ENCODE measurements at regions of chr12 and their contacts with region 1.

Region 1: DNA sequence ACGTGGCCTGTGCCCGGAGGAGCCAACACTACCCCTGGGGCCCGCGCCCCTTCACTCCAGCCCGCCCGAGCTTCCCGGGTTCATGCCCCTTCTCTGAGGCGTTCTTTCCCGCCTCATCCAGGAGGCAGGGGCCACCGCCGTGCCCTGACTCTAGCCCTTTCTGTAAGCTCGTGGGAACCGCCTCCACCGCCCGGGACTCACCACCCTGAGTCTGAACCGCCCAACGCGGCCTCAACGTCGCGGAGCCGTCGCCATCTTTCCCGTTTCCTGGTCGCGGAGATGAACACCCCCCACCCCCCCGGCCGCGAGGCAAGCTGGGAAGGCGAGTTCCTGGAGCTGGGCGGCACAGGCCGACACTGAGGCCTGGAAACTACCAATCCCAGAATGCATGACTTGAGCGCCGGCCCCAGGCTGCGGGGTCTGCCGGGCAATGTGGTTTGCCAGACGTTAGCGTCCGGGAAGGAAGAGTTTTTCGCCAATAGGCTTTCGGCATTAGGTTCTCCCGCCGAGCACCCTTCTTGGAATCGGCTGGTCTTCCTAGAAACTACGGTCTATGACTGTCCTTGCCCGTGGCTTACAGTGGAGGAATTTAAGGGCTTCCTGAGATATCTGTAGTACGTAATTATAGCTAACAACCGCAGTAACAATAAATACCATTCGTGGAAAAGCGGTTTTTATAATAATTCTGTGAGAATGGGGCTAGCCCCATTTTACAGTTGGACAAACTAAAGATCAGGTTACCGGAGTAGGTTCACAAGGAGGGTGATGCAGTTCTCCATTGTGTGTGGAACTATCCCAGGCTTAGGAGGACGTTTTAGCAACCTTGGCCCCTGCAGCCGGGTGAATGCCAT is at the start of gene DDX23:
- DNase-seq: peak; percentile 82 to 98 (median 88)
- ATAC-seq: peak; percentile 93
- H3K4me3 ChIP-seq: peak within 1 kb of the TSS; percentile 81
- H3K4me3 Mint-ChIP-seq: peak within 1 kb of the TSS; percentile 98
- H3K27ac ChIP-seq: peak within 1 kb of the TSS; percentile 83 to 94
- H3K27ac Mint-ChIP-seq: peak within 1 kb of the TSS; percentile 93
- H3K4me1 ChIP-seq: peaks cover 47% of the 10 kb centered on the region
- H3K4me1 Mint-ChIP-seq: peaks cover 47% of the 10 kb centered on the region
- H3K27me3 ChIP-seq: no peaks in the 10 kb centered on the region
- H3K27me3 Mint-ChIP-seq: no peaks in the 10 kb centered on the region
- CTCF ChIP-seq: no peak
- total RNA-seq, gene DDX23: 69.4 to 76.5 TPM

Region 2: GRCh38 chr12:48379780-48380179 is 472.3 kb before region 1 on chr12:
- CTCF ChIA-PET with region 1: no interaction called
- POLR2A ChIA-PET with region 1: no interaction called
- intact Hi-C with region 1: no loop called
- DNase-seq: no peak
- ATAC-seq: no peak
- H3K4me3 ChIP-seq: no peak overlapping the region
- H3K4me3 Mint-ChIP-seq: no peak overlapping the region
- H3K27ac ChIP-seq: no peak overlapping the region
- H3K27ac Mint-ChIP-seq: no peak overlapping the region
- H3K4me1 ChIP-seq: no peaks in the 10 kb centered on the region
- H3K4me1 Mint-ChIP-seq: no peaks in the 10 kb centered on the region
- H3K27me3 ChIP-seq: no peaks in the 10 kb centered on the region
- H3K27me3 Mint-ChIP-seq: peaks cover 5% of the 10 kb centered on the region
- CTCF ChIP-seq: no peak

Region 3: DNA sequence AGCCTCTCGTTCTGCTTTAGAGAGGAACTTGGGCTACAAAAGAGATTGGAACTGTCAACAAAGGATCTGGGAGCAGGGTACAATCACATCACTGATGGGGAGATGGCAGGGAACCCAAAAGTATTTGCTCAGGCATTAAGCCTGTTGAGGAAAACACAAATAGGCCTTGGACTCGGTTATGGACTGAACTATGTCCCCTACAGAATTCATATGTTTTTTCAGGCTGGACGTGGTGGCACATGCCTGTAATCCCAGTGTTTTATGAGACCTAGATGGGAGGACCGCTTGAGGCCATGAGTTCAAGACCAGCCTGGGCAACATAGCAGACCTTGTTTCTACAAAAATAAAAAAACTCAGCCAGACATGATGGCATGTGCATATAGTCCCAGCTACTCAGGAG is 14.1 kb before region 1 on chr12:
- CTCF ChIA-PET with region 1: interaction called, 12 read pairs
- POLR2A ChIA-PET with region 1: interaction called, 4 read pairs
- intact Hi-C with region 1: no loop called
- DNase-seq: no peak
- ATAC-seq: no peak
- H3K4me3 ChIP-seq: no peak overlapping the region
- H3K4me3 Mint-ChIP-seq: no peak overlapping the region
- H3K27ac ChIP-seq: no peak overlapping the region
- H3K27ac Mint-ChIP-seq: no peak overlapping the region
- H3K4me1 ChIP-seq: no peaks in the 10 kb centered on the region
- H3K4me1 Mint-ChIP-seq: no peaks in the 10 kb centered on the region
- H3K27me3 ChIP-seq: no peaks in the 10 kb centered on the region
- H3K27me3 Mint-ChIP-seq: no peaks in the 10 kb centered on the region
- CTCF ChIP-seq: no peak

Region 4: GRCh38 chr12:48890657-48891418 is 38.7 kb after region 1 on chr12:
- CTCF ChIA-PET with region 1: interaction called, 64 read pairs
- POLR2A ChIA-PET with region 1: interaction called, 47 read pairs
- intact Hi-C with region 1: loop called (anchors 1 kb)
- DNase-seq: peak; percentile 51 to 85 (median 70)
- ATAC-seq: peak; percentile 96
- H3K4me3 ChIP-seq: no peak overlapping the region
- H3K4me3 Mint-ChIP-seq: no peak overlapping the region
- H3K27ac ChIP-seq: no peak overlapping the region
- H3K27ac Mint-ChIP-seq: no peak overlapping the region
- H3K4me1 ChIP-seq: peaks cover 10% of the 10 kb centered on the region
- H3K4me1 Mint-ChIP-seq: peaks cover 5% of the 10 kb centered on the region
- H3K27me3 ChIP-seq: peaks cover 10 to 17% of the 10 kb centered on the region in 2 experiments
- H3K27me3 Mint-ChIP-seq: peaks cover 22% of the 10 kb centered on the region
- CTCF ChIP-seq: peak; percentile 86

Region 5: GRCh38 chr12:48924617-48925303 is 72.7 kb after region 1 on chr12:
- CTCF ChIA-PET with region 1: interaction called, 24 read pairs
- POLR2A ChIA-PET with region 1: interaction called, 31 read pairs
- intact Hi-C with region 1: no loop called
- DNase-seq: peak; percentile 60 to 91 (median 74)
- ATAC-seq: peak; percentile 84
- H3K4me3 ChIP-seq: peak overlapping the region; percentile 100
- H3K4me3 Mint-ChIP-seq: peak overlapping the region; percentile 99
- H3K27ac ChIP-seq: peak overlapping the region; percentile 87 to 91
- H3K27ac Mint-ChIP-seq: peak overlapping the region; percentile 86
- H3K4me1 ChIP-seq: peaks cover 52% of the 10 kb centered on the region
- H3K4me1 Mint-ChIP-seq: peaks cover 63% of the 10 kb centered on the region
- H3K27me3 ChIP-seq: no peaks in the 10 kb centered on the region
- H3K27me3 Mint-ChIP-seq: no peaks in the 10 kb centered on the region
- CTCF ChIP-seq: peak; percentile 75

Region 6: GRCh38 chr12:48957141-48958048 is 105.3 kb after region 1 on chr12 and contains the start of gene ARF3:
- CTCF ChIA-PET with region 1: interaction called, 5 read pairs
- POLR2A ChIA-PET with region 1: interaction called, 29 read pairs
- intact Hi-C with region 1: no loop called
- DNase-seq: peak; percentile 84 to 97 (median 92)
- ATAC-seq: peak; percentile 96
- H3K4me3 ChIP-seq: peak within 1 kb of the TSS; percentile 86
- H3K4me3 Mint-ChIP-seq: peak within 1 kb of the TSS; percentile 100
- H3K27ac ChIP-seq: peak within 1 kb of the TSS; percentile 35 to 51
- H3K27ac Mint-ChIP-seq: peak within 1 kb of the TSS; percentile 91
- H3K4me1 ChIP-seq: peaks cover 25% of the 10 kb centered on the region
- H3K4me1 Mint-ChIP-seq: peaks cover 54% of the 10 kb centered on the region
- H3K27me3 ChIP-seq: no peaks in the 10 kb centered on the region
- H3K27me3 Mint-ChIP-seq: peaks cover 6% of the 10 kb centered on the region
- CTCF ChIP-seq: no peak
- total RNA-seq, gene ARF3: 32.0 to 34.6 TPM

Region 7: DNA sequence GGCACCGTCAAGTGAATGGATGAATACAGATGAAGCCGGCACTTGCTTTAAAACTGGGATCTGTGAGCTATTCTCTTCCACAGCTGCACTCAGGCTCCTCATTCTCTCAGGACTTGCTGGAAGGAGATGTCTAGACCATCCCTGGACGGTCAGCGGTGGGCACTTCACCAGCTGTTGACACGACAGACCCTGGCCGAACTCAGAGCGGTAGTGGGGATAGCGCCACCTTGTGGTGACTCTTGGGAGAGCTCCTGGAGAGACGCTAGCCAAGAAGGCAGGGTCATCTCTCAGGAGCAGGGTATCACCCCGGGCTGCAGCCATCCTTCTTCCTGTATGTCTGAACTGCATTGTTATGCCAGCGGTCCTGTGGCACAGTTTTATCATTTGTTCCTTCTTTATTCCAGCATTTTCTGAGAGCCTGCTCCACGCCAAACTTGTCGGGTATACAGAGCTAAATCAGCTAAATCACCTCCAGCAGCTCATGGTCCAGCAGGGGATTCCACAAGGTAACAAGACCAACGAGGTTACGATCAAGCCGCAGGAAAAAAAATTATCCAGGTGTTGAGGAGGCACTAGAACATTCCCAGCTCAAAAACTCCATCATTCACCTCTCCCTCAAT is 136.0 kb after region 1 on chr12:
- CTCF ChIA-PET with region 1: interaction called, 11 read pairs
- POLR2A ChIA-PET with region 1: interaction called, 12 read pairs
- intact Hi-C with region 1: loop called in 1 of 2 experiments (anchors 2 kb)
- DNase-seq: peak; percentile 50 to 85 (median 68)
- ATAC-seq: peak; percentile 76
- H3K4me3 ChIP-seq: no peak overlapping the region
- H3K4me3 Mint-ChIP-seq: no peak overlapping the region
- H3K27ac ChIP-seq: no peak overlapping the region
- H3K27ac Mint-ChIP-seq: no peak overlapping the region
- H3K4me1 ChIP-seq: peaks cover 7% of the 10 kb centered on the region
- H3K4me1 Mint-ChIP-seq: peaks cover 6% of the 10 kb centered on the region
- H3K27me3 ChIP-seq: peaks cover 0 to 23% of the 10 kb centered on the region in 2 experiments
- H3K27me3 Mint-ChIP-seq: peaks cover 50% of the 10 kb centered on the region
- CTCF ChIP-seq: peak; percentile 81

Region 8: GRCh38 chr12:49188914-49189367 is 336.8 kb after region 1 on chr12 and contains the start of gene TUBA1A:
- CTCF ChIA-PET with region 1: no interaction called
- POLR2A ChIA-PET with region 1: interaction called, 15 read pairs
- intact Hi-C with region 1: no loop called
- DNase-seq: peak; percentile 92 to 99 (median 94)
- ATAC-seq: peak; percentile 83
- H3K4me3 ChIP-seq: peak within 1 kb of the TSS; percentile 95
- H3K4me3 Mint-ChIP-seq: peak within 1 kb of the TSS; percentile 96
- H3K27ac ChIP-seq: peak within 1 kb of the TSS; percentile 98 to 100
- H3K27ac Mint-ChIP-seq: peak within 1 kb of the TSS; percentile 99
- H3K4me1 ChIP-seq: peaks cover 15% of the 10 kb centered on the region
- H3K4me1 Mint-ChIP-seq: peaks cover 21% of the 10 kb centered on the region
- H3K27me3 ChIP-seq: no peaks in the 10 kb centered on the region
- H3K27me3 Mint-ChIP-seq: no peaks in the 10 kb centered on the region
- CTCF ChIP-seq: no peak
- total RNA-seq, gene TUBA1A: 295 to 305 TPM

Measured in CD4-positive, alpha-beta T cell (primary cell).